Calu3 (cell line): ENCODE measurements at regions of chr2 and their contacts with region 1.

Region 1: DNA sequence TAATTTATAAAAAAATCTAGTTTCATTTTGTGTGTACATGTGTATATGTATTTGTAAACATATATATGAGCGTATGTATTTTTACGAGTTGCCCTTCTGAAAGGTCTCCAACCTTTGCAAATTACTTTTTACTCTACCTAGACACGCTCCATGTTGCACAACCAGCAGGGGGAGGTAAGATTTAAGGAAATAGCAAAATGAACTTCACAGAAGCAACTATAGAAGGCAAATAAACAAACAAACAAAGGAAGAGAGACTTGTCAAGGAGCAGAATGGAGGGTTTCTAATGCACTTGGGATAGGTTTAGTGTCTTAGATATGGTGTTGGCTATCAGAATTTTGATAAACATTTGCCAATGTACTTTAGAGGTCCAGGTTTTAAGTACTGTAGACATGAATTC is 820.5 kb upstream of the POU3F3 start:
- DNase-seq: no peak
- H3K4me3 Mint-ChIP-seq: no peak overlapping the region
- H3K27ac Mint-ChIP-seq: no peak overlapping the region
- H3K4me1 Mint-ChIP-seq: no peaks in the 10 kb centered on the region
- H3K27me3 Mint-ChIP-seq: no peaks in the 10 kb centered on the region
- CTCF ChIP-seq: no peak

Region 2: DNA sequence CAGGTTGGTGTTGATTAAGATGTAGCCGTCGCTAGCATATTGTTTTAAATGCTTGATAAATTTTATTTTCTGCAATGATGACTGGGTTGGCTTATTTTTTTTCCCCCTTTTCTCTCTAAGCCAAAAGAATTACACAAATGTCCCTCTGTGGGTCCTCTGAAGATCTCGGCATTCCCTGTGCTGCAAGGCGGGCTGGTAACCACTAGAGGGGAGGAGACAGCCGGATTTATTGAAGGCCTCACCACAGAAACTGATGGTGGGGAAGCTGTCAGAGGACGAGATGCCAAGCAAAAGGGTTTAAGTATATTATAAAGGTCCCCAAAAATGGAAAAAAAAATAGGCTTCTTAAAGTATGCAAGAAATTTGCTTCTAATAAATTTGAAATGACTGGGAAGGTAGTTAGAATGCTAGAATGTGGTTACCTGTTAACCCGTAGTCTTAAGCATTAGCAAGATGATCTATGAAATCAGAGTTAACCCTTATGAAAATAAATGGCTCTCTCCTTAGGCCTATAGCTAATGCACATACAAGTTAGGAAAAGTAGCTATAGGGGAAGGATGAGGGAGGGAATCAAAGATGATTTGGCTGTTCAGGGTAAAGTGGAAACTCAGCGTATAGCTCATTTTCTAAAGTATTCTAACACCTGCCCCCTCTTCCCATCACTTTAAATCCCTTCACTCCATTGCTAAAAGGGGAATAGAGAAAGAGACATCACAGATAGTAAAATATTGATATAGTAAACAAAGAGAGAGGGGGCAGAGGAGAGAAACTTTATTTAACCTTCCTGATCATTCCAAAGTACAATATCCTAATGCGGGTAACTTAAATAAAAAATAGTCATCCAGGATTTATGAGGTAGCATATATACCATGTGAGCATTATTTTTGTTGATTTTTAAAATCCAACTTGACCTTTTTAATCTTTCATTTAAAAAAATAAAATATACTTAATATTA is 73.9 kb before region 1 on chr2:
- CTCF ChIA-PET with region 1: no interaction called
- intact Hi-C with region 1: no loop called
- DNase-seq: peak; percentile 32
- H3K4me3 Mint-ChIP-seq: no peak overlapping the region
- H3K27ac Mint-ChIP-seq: no peak overlapping the region
- H3K4me1 Mint-ChIP-seq: no peaks in the 10 kb centered on the region
- H3K27me3 Mint-ChIP-seq: no peaks in the 10 kb centered on the region
- CTCF ChIP-seq: peak; percentile 32

Region 3: GRCh38 chr2:104872866-104873688 is 839.7 kb after region 1 on chr2:
- CTCF ChIA-PET with region 1: no interaction called
- intact Hi-C with region 1: loop called (anchors 10 kb)
- DNase-seq: peak; percentile 69
- H3K4me3 Mint-ChIP-seq: peak overlapping the region; percentile 73
- H3K27ac Mint-ChIP-seq: no peak overlapping the region
- H3K4me1 Mint-ChIP-seq: no peaks in the 10 kb centered on the region
- H3K27me3 Mint-ChIP-seq: peaks cover 72% of the 10 kb centered on the region
- CTCF ChIP-seq: peak; percentile 65